CD4-positive, alpha-beta T cell (primary cell): ENCODE measurements at regions of chr17 and their contacts with region 1.

Region 1: GRCh38 chr17:39621523-39622379 is 5.0 kb upstream of the PPP1R1B start:
- DNase-seq: peak; percentile 67 to 96 (median 88)
- ATAC-seq: peak; percentile 74
- H3K4me3 ChIP-seq: peak overlapping the region; percentile 25
- H3K4me3 Mint-ChIP-seq: peak overlapping the region; percentile 62
- H3K27ac ChIP-seq: no peak overlapping the region
- H3K27ac Mint-ChIP-seq: peak overlapping the region; percentile 74
- H3K4me1 ChIP-seq: peaks cover 48% of the 10 kb centered on the region
- H3K4me1 Mint-ChIP-seq: peaks cover 25% of the 10 kb centered on the region
- H3K27me3 ChIP-seq: peaks cover 15 to 19% of the 10 kb centered on the region in 2 experiments
- H3K27me3 Mint-ChIP-seq: peaks cover 30% of the 10 kb centered on the region
- CTCF ChIP-seq: peak; percentile 100

Region 2: GRCh38 chr17:39547713-39548478 is 73.9 kb before region 1 on chr17:
- CTCF ChIA-PET with region 1: interaction called, 13 read pairs
- POLR2A ChIA-PET with region 1: interaction called, 4 read pairs
- intact Hi-C with region 1: loop called (anchors 1 kb)
- DNase-seq: peak; percentile 56 to 85 (median 74)
- ATAC-seq: peak; percentile 85
- H3K4me3 ChIP-seq: no peak overlapping the region
- H3K4me3 Mint-ChIP-seq: no peak overlapping the region
- H3K27ac ChIP-seq: no peak overlapping the region
- H3K27ac Mint-ChIP-seq: no peak overlapping the region
- H3K4me1 ChIP-seq: no peaks in the 10 kb centered on the region
- H3K4me1 Mint-ChIP-seq: no peaks in the 10 kb centered on the region
- H3K27me3 ChIP-seq: no peaks in the 10 kb centered on the region
- H3K27me3 Mint-ChIP-seq: no peaks in the 10 kb centered on the region
- CTCF ChIP-seq: peak; percentile 96

Region 3: DNA sequence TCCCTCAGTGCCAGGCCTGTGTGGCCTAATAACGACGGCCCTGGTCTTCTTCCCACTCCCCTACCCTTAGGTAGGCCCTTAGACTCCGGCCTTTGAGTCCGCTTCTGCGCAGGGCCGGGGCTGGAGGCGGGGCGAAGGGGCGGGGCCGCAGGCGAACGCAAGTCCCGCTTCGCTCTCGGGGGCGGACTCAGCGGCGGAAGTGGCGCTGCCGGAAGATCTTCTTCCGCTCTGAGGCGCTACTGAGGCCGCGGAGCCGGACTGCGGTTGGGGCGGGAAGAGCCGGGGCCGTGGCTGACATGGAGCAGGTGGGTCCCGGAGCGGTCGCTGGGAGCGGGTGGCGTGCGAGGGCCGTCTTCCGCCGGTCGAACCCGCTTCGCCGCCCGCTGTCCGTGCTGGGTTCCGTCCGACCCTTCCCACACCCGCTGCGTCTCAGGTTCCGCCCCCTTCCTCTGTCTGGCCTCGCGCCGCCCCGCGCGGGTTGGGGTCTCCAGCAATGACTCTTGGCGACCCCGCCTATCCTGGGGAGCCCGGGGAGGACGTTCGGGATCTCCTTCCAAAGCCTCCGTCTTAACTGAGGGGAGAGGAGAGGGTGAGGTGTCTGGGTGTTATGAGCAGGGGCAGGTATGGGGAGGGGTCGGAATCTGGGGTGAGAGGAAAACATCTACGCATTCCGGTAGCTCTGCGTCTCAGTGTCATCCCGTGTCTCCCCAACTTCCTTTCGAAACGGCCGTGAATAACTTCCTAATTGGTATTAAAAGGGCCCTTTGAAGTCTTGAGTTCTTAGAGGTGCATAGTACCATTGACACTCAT is 15.4 kb after region 1 on chr17 and contains the start of gene STARD3:
- CTCF ChIA-PET with region 1: interaction called, 65 read pairs
- POLR2A ChIA-PET with region 1: interaction called, 6 read pairs
- intact Hi-C with region 1: loop called (anchors 1 to 2 kb)
- DNase-seq: peak; percentile 84 to 95 (median 88)
- ATAC-seq: peak; percentile 82
- H3K4me3 ChIP-seq: peak within 1 kb of the TSS; percentile 94
- H3K4me3 Mint-ChIP-seq: peak within 1 kb of the TSS; percentile 97
- H3K27ac ChIP-seq: peak within 1 kb of the TSS; percentile 92 to 94
- H3K27ac Mint-ChIP-seq: peak within 1 kb of the TSS; percentile 91
- H3K4me1 ChIP-seq: peaks cover 76% of the 10 kb centered on the region
- H3K4me1 Mint-ChIP-seq: peaks cover 68% of the 10 kb centered on the region
- H3K27me3 ChIP-seq: peaks cover 0 to 2% of the 10 kb centered on the region in 2 experiments
- H3K27me3 Mint-ChIP-seq: no peaks in the 10 kb centered on the region
- CTCF ChIP-seq: peak; percentile 43
- total RNA-seq, gene STARD3: 96.5 to 99.9 TPM

Region 4: DNA sequence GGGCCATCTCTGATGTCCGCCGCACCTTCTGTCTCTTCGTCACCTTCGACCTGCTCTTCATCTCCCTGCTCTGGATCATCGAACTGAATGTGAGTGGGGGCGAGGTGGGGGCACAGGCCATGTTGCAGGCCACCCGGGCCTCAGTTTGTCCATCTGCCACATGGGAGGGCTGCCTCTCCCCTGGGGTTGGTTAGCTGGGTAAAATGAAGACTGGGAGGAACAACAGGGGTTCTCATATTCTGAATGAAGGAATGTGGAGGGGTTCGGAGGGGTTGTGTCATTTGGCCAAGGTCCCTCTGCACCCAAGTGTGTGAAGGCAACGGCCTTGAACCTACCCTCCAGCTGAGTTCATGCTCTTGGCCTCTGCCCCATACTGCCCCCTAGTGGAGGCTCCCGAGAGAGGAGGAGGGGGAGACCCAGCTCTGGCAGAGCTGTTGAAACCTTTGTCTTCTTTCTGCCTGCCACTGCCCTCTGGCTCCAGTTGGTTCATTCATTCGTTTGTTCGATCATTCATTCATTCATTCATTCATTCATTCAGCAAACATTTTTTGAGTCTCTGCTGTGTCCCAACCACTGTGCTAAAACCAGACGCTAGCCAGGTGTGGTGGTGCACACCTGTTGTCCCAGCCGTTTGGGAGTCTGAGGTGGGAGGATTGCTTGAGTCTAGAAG is 32.0 kb after region 1 on chr17:
- CTCF ChIA-PET with region 1: interaction called, 66 read pairs
- POLR2A ChIA-PET with region 1: interaction called, 6 read pairs
- intact Hi-C with region 1: loop called in 1 of 2 experiments (anchors 1 kb)
- DNase-seq: peak; percentile 70 to 87 (median 77)
- ATAC-seq: peak; percentile 84
- H3K4me3 ChIP-seq: no peak overlapping the region
- H3K4me3 Mint-ChIP-seq: no peak overlapping the region
- H3K27ac ChIP-seq: no peak overlapping the region
- H3K27ac Mint-ChIP-seq: peak overlapping the region; percentile 70
- H3K4me1 ChIP-seq: peaks cover 28% of the 10 kb centered on the region
- H3K4me1 Mint-ChIP-seq: peaks cover 61% of the 10 kb centered on the region
- H3K27me3 ChIP-seq: no peaks in the 10 kb centered on the region
- H3K27me3 Mint-ChIP-seq: no peaks in the 10 kb centered on the region
- CTCF ChIP-seq: peak; percentile 97

Region 5: DNA sequence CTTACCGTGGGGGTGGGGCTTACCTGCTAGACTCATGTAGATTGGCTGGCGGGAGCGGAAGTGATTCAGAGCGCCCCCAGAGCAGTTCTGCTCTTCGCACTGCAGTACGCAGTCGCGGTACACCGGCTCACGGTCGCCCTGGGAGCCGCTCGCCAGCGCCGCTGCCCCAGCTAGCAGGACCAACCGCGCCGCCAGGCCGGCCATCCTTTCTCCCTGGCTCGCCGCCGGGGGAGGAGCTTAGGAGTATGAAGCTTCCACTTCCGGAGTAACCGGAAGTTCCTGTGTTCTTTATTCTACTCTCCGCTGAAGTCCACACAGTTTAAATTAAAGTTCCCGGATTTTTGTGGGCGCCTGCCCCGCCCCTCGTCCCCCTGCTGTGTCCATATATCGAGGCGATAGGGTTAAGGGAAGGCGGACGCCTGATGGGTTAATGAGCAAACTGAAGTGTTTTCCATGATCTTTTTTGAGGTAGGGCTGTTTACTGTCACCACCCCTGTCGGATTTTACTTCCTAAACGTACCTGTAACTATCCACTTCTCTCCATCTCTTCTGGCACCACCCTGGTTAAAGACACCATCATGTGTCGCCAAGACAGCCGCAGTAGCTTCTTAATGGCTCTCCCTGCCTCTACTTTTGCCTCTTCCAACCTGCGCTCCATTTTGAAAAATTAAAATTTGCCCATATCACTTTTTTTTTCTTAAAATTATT is 66.2 kb after region 1 on chr17 and contains the start of gene PGAP3:
- CTCF ChIA-PET with region 1: interaction called, 10 read pairs
- POLR2A ChIA-PET with region 1: interaction called, 5 read pairs
- intact Hi-C with region 1: no loop called
- DNase-seq: peak; percentile 66 to 91 (median 74)
- ATAC-seq: peak; percentile 87
- H3K4me3 ChIP-seq: peak within 1 kb of the TSS; percentile 74
- H3K4me3 Mint-ChIP-seq: peak within 1 kb of the TSS; percentile 100
- H3K27ac ChIP-seq: peak within 1 kb of the TSS; percentile 83
- H3K27ac Mint-ChIP-seq: peak within 1 kb of the TSS; percentile 98
- H3K4me1 ChIP-seq: peaks cover 19% of the 10 kb centered on the region
- H3K4me1 Mint-ChIP-seq: peaks cover 31% of the 10 kb centered on the region
- H3K27me3 ChIP-seq: no peaks in the 10 kb centered on the region
- H3K27me3 Mint-ChIP-seq: no peaks in the 10 kb centered on the region
- CTCF ChIP-seq: no peak
- total RNA-seq, gene PGAP3: 26.1 to 30.7 TPM

Region 6: DNA sequence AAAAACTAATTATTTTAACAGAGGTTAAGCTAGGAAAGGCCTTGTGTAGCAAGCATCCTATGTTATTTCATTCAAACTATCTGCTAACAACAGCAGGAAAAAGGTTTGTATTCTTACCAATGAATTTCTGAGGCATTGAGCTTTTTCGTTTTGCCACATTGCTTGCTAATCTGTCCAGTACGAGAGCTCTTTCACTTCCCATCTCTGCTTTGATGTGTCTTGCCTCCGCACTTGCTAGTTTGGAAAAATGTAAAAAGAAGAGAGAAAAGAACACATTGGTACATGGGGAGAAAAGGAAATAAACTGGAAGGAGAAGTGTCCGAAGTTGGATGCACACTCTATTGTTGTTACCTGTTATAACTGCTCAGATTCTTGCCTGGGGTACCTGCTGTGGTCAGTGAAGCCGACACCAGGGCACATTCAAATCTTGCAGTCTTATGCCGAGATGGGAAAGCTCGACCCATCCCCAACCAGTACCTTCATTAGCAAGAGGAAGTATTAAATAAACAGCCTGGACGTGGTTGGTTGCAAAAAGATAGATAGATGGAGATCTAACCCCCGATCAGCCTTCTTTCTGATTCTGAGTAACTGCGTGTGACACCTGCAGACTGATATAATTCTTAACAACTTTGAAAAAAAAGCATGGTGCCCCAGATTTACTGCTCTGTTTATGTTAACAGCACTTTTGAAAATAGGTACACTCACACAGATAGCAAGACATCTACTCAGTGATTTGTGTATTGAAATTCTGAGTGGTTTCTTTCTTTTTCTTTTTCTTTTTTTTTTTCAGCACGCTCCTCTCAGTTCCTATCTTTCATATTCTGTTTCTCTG is 156.0 kb after region 1 on chr17:
- CTCF ChIA-PET with region 1: interaction called, 18 read pairs
- POLR2A ChIA-PET with region 1: interaction called, 3 read pairs
- intact Hi-C with region 1: no loop called
- DNase-seq: peak in 4 of 14 experiments; percentile 42 to 67 (median 66)
- ATAC-seq: peak; percentile 58
- H3K4me3 ChIP-seq: peak overlapping the region; percentile 64
- H3K4me3 Mint-ChIP-seq: peak overlapping the region; percentile 91
- H3K27ac ChIP-seq: peak overlapping the region; percentile 74 to 78
- H3K27ac Mint-ChIP-seq: peak overlapping the region; percentile 84
- H3K4me1 ChIP-seq: peaks cover 62% of the 10 kb centered on the region
- H3K4me1 Mint-ChIP-seq: peaks cover 89% of the 10 kb centered on the region
- H3K27me3 ChIP-seq: no peaks in the 10 kb centered on the region
- H3K27me3 Mint-ChIP-seq: no peaks in the 10 kb centered on the region
- CTCF ChIP-seq: no peak

Region 7: GRCh38 chr17:39980351-39981206 is 358.8 kb after region 1 on chr17 and contains the start of gene PSMD3:
- CTCF ChIA-PET with region 1: interaction called, 8 read pairs
- POLR2A ChIA-PET with region 1: interaction called, 10 read pairs
- intact Hi-C with region 1: loop called (anchors 1 to 5 kb)
- DNase-seq: peak; percentile 95 to 100 (median 98)
- ATAC-seq: peak; percentile 94
- H3K4me3 ChIP-seq: peak within 1 kb of the TSS; percentile 96
- H3K4me3 Mint-ChIP-seq: peak within 1 kb of the TSS; percentile 89
- H3K27ac ChIP-seq: peak within 1 kb of the TSS; percentile 89 to 97
- H3K27ac Mint-ChIP-seq: peak within 1 kb of the TSS; percentile 95
- H3K4me1 ChIP-seq: peaks cover 25% of the 10 kb centered on the region
- H3K4me1 Mint-ChIP-seq: peaks cover 39% of the 10 kb centered on the region
- H3K27me3 ChIP-seq: no peaks in the 10 kb centered on the region
- H3K27me3 Mint-ChIP-seq: no peaks in the 10 kb centered on the region
- CTCF ChIP-seq: peak; percentile 70
- total RNA-seq, gene PSMD3: 66.7 to 71.9 TPM